ENCODE measurements at regions of chrX and their contacts with region 1.

Region 1: GRCh38 chrX:115330498-115331168 is 41.1 kb downstream of the LUZP4 start:
- DNase-seq: peak; percentile 69
- ATAC-seq: peak; percentile 78
- H3K4me3 ChIP-seq: no peak overlapping the region
- H3K27ac ChIP-seq: no peak overlapping the region
- H3K4me1 ChIP-seq: no peaks in the 10 kb centered on the region
- H3K27me3 ChIP-seq: no peaks in the 10 kb centered on the region
- CTCF ChIP-seq: peak; percentile 75

Region 2: GRCh38 chrX:115547448-115547847 is 216.8 kb after region 1 on chrX:
- CTCF ChIA-PET with region 1: interaction called, 4 read pairs
- POLR2A ChIA-PET with region 1: no interaction called
- intact Hi-C with region 1: loop called (anchors 1 kb)
- DNase-seq: peak; percentile 49
- ATAC-seq: peak; percentile 61
- H3K4me3 ChIP-seq: no peak overlapping the region
- H3K27ac ChIP-seq: no peak overlapping the region
- H3K4me1 ChIP-seq: no peaks in the 10 kb centered on the region
- H3K27me3 ChIP-seq: no peaks in the 10 kb centered on the region
- CTCF ChIP-seq: peak; percentile 61

Region 3: DNA sequence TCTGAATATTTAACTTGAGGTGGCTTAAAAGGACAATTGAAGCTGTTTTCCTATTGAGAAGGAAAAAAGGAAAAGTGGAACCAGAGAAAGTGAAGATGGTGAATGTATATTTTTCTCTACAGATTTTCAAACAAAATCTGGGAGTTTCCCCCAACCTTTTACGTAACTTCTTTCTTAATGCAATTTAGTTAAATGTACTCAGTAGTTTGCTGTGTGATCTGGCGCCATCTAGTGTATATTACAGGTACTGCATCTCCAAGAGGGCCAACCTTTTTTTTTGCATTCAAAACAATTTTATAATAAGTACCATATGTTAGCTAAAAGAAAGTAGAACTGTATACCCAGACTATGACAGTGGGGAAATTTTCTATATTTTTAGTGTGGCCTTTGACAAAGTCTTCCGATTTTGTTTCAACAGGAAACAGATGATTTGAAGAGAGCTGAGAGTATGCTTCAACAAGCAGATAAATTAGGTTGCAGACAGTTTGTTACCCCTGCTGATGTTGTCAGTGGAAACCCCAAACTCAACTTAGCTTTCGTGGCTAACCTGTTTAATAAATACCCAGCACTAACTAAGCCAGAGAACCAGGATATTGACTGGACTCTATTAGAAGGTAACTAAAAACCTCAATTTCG is 312.4 kb after region 1 on chrX:
- CTCF ChIA-PET with region 1: no interaction called
- POLR2A ChIA-PET with region 1: no interaction called
- intact Hi-C with region 1: loop called (anchors 1 kb)
- DNase-seq: peak; percentile 75
- ATAC-seq: peak; percentile 43
- H3K4me3 ChIP-seq: no peak overlapping the region
- H3K27ac ChIP-seq: peak overlapping the region; percentile 66
- H3K4me1 ChIP-seq: no peaks in the 10 kb centered on the region
- H3K27me3 ChIP-seq: no peaks in the 10 kb centered on the region
- CTCF ChIP-seq: peak; percentile 91

Region 4: DNA sequence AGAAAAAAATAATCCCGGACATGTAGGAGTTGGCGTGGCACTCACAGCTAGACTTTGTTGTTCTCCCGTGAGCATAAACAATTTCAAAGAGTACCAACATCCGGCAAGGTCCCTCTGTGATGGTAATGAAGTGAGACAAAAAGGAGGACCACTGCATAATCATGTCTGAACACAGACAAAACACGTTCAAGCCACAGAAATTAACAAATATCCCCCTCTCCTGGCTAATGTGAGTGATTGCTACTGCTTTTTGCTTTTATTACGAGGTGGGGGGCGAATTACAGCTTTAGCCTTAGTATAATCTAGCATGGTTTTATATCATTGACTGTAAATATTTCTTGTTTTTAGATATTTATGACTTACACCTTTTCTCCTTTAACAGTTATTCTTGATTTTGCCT is 348.8 kb after region 1 on chrX:
- CTCF ChIA-PET with region 1: no interaction called
- POLR2A ChIA-PET with region 1: no interaction called
- intact Hi-C with region 1: loop called (anchors 1 kb)
- DNase-seq: peak; percentile 56
- ATAC-seq: peak; percentile 59
- H3K4me3 ChIP-seq: no peak overlapping the region; the same call in 1 of the 2 replicates
- H3K27ac ChIP-seq: no peak overlapping the region
- H3K4me1 ChIP-seq: no peaks in the 10 kb centered on the region
- H3K27me3 ChIP-seq: no peaks in the 10 kb centered on the region
- CTCF ChIP-seq: peak; percentile 69

Region 5: GRCh38 chrX:115940888-115941332 is 610.3 kb after region 1 on chrX:
- CTCF ChIA-PET with region 1: no interaction called
- POLR2A ChIA-PET with region 1: no interaction called
- intact Hi-C with region 1: loop called (anchors 10 kb)
- DNase-seq: peak; percentile 81
- ATAC-seq: peak; percentile 88
- H3K4me3 ChIP-seq: no peak overlapping the region
- H3K27ac ChIP-seq: no peak overlapping the region
- H3K4me1 ChIP-seq: peaks cover 5% of the 10 kb centered on the region
- H3K27me3 ChIP-seq: no peaks in the 10 kb centered on the region
- CTCF ChIP-seq: peak; percentile 60

Measured in PC-3 (cell line).